HEK293 (cell line): ENCODE measurements at regions of chr1 and their contacts with region 1.

Region 1: DNA sequence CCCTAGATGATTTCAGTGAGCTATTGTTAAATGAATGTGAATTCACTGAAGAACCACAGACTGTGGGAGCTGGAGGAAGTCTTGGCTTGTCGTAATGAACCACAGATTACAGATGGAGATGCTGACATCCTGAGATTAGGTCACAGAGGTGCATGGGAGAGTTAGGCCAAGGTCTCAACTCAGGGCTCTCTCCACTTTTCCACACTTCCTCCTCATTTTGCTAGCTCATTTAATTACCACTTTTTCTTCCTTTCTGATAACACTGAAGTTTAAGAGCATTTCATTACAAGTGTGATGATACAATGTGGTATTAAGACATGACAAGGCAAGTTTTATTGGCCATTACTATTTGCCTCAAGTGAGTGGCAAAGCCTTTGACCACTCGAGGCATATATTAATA is 30.8 kb downstream of the ST6GALNAC3 start:
- H3K4me3 ChIP-seq: no peak overlapping the region
- H3K27ac ChIP-seq: no peak overlapping the region
- H3K4me1 ChIP-seq: peaks cover 16% of the 10 kb centered on the region
- CTCF ChIP-seq: no peak

Region 2: GRCh38 chr1:76090283-76091203 is 14.8 kb before region 1 on chr1:
- CTCF ChIA-PET with region 1: interaction called, 11 read pairs
- POLR2A ChIA-PET with region 1: no interaction called
- H3K4me3 ChIP-seq: no peak overlapping the region
- H3K27ac ChIP-seq: no peak overlapping the region
- H3K4me1 ChIP-seq: peaks cover 17% of the 10 kb centered on the region
- CTCF ChIP-seq: no peak

Region 3: GRCh38 chr1:76170513-76170912 is 65.1 kb after region 1 on chr1:
- CTCF ChIA-PET with region 1: no interaction called
- POLR2A ChIA-PET with region 1: no interaction called
- H3K4me3 ChIP-seq: no peak overlapping the region
- H3K27ac ChIP-seq: no peak overlapping the region
- H3K4me1 ChIP-seq: no peaks in the 10 kb centered on the region
- CTCF ChIP-seq: no peak

Region 4: DNA sequence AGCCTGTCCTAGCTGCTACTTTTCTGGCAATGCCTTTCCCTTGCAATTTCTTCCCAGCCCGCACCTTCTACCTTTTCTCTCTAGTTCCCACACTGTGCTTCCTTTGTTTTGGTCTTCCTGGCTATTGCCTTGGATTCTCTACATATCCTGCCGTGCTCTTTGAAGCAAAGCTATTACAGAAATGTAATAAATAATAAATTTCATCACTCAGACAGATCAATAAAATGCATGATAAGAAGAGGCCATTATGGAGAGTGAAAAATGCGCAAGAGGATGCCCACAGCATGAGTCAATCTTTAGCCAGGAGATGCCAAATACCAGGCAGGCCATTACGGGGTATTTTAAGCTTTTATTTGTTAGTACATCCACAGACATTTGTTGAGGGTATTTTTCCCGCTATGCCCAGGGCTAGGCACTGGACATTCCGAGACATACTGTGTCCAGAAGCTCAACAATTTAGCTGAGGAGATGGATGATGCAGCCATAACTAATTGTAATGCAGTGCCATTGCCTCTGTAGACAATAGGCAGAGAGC is 132.8 kb after region 1 on chr1:
- CTCF ChIA-PET with region 1: no interaction called
- POLR2A ChIA-PET with region 1: no interaction called
- H3K4me3 ChIP-seq: no peak overlapping the region
- H3K27ac ChIP-seq: no peak overlapping the region
- H3K4me1 ChIP-seq: peaks cover 16% of the 10 kb centered on the region
- CTCF ChIP-seq: no peak

Region 5: DNA sequence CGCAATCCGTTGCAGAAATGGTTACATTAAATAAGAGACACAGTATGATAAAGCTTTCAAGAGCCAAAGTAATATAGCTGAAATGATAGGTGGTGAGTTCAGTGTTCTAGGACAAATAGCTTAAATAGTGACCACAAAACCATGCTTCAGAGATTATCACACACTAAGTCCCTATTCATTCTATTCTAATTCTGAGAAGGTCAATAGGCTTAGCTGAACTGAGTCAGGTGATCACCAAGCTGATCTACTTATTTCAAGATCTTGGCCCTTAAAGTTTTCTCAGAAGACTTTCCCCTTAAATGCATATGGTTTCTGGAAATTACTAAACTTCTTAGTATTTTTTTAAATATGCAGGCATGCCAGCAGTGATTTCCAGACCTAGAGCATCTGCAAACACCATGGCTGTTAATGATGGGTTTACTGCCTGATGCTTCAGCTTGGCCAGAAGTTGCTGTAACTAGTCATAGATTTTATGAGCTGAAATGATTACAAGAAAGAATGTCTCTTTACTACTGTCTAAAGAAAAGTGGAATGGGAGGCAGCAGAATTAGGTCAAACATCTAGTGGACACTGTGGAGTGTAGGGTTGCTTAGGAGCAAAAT is 212.0 kb after region 1 on chr1:
- CTCF ChIA-PET with region 1: no interaction called
- POLR2A ChIA-PET with region 1: no interaction called
- H3K4me3 ChIP-seq: no peak overlapping the region
- H3K27ac ChIP-seq: no peak overlapping the region
- H3K4me1 ChIP-seq: no peaks in the 10 kb centered on the region
- CTCF ChIP-seq: no peak